Activated CD8-positive, alpha-beta T cell treated with anti-CD3 and anti-CD28 coated beads, Interleukin-2, amount 10 ng/mL, durations not matched to agents 7 days and 5 days (primary cell): ENCODE measurements at regions of chr2 and their contacts with region 1.

Region 1: GRCh38 chr2:46364797-46365457 is 67.7 kb downstream of the EPAS1 start:
- DNase-seq: peak; percentile 59
- ATAC-seq: no peak
- H3K4me3 Mint-ChIP-seq: no peak overlapping the region
- H3K27ac Mint-ChIP-seq: no peak overlapping the region
- H3K4me1 Mint-ChIP-seq: peaks cover 71% of the 10 kb centered on the region
- H3K27me3 Mint-ChIP-seq: peaks cover under 1% of the 10 kb centered on the region

Region 2: GRCh38 chr2:46010925-46011490 is 353.9 kb before region 1 on chr2:
- CTCF ChIA-PET with region 1: interaction called, 14 read pairs
- POLR2A ChIA-PET with region 1: no interaction called
- DNase-seq: no peak
- ATAC-seq: peak; percentile 68
- H3K4me3 Mint-ChIP-seq: no peak overlapping the region
- H3K27ac Mint-ChIP-seq: no peak overlapping the region
- H3K4me1 Mint-ChIP-seq: peaks cover 14% of the 10 kb centered on the region
- H3K27me3 Mint-ChIP-seq: no peaks in the 10 kb centered on the region

Region 3: GRCh38 chr2:46230115-46230571 is 134.8 kb before region 1 on chr2:
- CTCF ChIA-PET with region 1: interaction called, 11 read pairs
- POLR2A ChIA-PET with region 1: no interaction called
- DNase-seq: peak; percentile 36
- ATAC-seq: peak; percentile 70
- H3K4me3 Mint-ChIP-seq: peak overlapping the region; percentile 34
- H3K27ac Mint-ChIP-seq: peak overlapping the region; percentile 85
- H3K4me1 Mint-ChIP-seq: peaks cover 28% of the 10 kb centered on the region
- H3K27me3 Mint-ChIP-seq: peaks cover 25% of the 10 kb centered on the region

Region 4: DNA sequence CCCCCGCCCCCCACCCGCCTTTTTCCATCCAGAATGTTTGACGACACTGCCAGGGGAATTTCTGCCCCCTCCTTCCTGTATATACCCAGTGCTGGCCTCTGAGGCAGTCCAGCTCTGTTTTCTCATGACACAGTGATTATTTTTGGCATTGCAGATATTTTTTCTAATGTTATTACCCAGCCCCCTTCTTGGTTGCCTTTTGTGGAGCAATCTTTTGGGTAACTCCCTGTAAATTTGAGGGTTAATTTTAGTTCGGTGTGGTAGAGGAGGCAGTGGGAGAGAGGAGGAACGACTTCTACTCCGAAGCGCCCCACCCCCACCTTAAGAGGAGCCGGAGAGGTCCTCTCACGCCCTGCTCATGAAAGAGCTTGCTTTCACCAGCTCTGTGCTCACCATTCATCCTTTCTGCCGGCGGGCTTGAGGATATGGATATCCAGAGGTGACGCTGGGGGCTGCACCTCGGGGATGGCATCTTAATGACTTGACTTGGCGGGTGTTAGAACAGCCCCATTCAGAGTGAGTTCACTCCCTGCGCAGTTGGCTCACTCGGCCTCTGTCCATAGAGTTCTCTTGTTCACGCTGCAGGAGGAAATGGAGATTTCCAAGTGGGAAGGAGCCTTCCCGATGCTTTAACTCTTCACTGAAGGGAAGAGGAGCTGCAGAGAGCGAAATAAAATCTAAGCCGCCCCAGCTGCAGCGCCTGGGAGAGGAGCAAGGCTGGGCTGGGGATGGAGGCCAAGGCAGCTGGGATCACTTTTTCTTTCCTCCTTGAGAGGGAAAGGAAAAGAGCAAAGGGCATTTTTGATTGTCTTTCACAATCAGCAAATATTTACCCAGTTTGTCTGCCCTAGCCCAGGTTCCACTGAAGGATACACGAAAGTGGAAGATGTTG is 29.3 kb before region 1 on chr2:
- CTCF ChIA-PET with region 1: interaction called, 15 read pairs
- POLR2A ChIA-PET with region 1: no interaction called
- DNase-seq: no peak
- ATAC-seq: no peak
- H3K4me3 Mint-ChIP-seq: no peak overlapping the region
- H3K27ac Mint-ChIP-seq: no peak overlapping the region
- H3K4me1 Mint-ChIP-seq: peaks cover 38% of the 10 kb centered on the region
- H3K27me3 Mint-ChIP-seq: peaks cover 21% of the 10 kb centered on the region

Region 5: GRCh38 chr2:46451131-46451711 is 86.3 kb after region 1 on chr2:
- CTCF ChIA-PET with region 1: no interaction called
- POLR2A ChIA-PET with region 1: no interaction called
- DNase-seq: no peak
- ATAC-seq: no peak
- H3K4me3 Mint-ChIP-seq: no peak overlapping the region
- H3K27ac Mint-ChIP-seq: no peak overlapping the region
- H3K4me1 Mint-ChIP-seq: no peaks in the 10 kb centered on the region
- H3K27me3 Mint-ChIP-seq: peaks cover 21% of the 10 kb centered on the region